Activated naive CD4-positive, alpha-beta T cell treated with anti-CD3 and anti-CD28 coated beads for 36 hours (primary cell): ENCODE measurements at regions of chr17 and their contacts with region 1.

Region 1: DNA sequence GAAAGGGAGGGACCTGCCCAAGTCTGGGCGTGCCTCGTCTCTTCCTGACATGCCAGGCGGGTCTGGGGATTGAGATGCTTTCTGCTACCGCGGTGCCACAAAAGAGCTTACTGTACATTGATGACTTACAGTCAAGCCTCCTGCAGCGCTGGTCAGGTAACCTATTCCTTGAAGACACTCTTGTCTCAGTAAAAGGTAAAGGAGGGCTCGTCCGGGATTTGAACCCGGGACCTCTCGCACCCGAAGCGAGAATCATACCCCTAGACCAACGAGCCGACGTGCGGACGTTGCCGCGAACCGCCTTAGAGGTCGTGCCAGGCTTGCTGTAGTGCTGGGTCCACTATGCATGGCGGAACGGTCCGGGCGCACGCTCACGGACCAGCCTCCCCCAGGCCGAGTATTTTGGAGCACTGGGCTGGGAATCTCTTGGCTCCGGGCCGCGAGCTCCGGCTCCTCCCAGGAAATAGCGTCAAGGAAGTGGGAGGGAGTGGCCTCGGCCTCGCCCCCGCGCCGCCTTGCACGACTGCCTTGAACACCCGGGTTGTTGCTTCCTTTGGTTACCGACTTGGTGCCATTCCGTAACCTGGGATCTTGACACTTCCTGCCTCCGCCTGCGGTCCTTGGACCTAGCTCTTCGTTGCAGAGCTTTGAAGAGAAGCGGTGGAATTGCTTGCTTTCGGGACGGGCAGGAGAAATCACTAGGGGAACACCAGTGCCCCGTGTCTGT is 12.4 kb upstream of the AURKB start:
- DNase-seq: peak; percentile 94
- H3K4me3 Mint-ChIP-seq: peak overlapping the region; percentile 96
- H3K27ac Mint-ChIP-seq: peak overlapping the region; percentile 96
- H3K4me1 Mint-ChIP-seq: peaks cover 37% of the 10 kb centered on the region
- H3K27me3 Mint-ChIP-seq: peaks cover 15% of the 10 kb centered on the region

Region 2: DNA sequence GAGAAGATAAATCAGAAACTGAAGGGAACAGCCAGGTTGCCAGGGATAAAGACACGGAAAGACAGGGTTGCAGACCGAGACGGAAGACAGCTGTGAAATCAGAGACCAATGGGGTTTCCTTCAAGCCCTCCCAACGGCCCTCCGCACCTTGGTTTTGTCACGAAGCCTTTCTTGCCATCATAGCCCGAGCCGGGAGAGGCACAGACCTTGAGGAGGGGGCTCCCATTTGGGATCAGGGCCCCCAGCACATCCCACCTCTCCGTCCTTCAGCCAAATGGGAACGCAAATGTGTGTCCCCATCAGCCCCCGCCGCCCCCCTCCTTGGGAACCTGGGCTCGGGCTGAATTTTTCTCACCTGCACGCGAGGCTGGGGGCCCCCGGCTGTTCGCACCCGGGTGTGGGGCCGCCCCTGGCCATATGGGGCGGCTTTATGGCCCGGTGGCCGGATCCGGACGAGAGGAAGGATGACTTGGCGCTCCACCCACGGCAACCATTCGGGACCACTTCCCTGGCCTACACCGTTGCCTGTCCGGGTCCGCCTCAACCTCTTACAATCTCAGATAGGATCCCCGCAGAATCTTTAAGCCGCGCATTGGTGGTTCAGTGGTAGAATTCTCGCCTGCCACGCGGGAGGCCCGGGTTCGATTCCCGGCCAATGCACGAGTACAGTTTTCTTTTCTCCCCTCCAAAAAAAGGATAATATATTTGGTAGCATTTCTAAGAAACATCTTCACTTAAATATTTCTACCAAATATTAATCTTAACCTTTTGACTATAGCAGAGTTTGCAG is 97.4 kb before region 1 on chr17:
- CTCF ChIA-PET with region 1: interaction called, 18 read pairs
- intact Hi-C with region 1: loop called (anchors 1 kb)
- DNase-seq: peak; percentile 96
- H3K4me3 Mint-ChIP-seq: peak overlapping the region; percentile 84
- H3K27ac Mint-ChIP-seq: peak overlapping the region; percentile 90
- H3K4me1 Mint-ChIP-seq: peaks cover 43% of the 10 kb centered on the region
- H3K27me3 Mint-ChIP-seq: peaks cover 29% of the 10 kb centered on the region

Region 3: DNA sequence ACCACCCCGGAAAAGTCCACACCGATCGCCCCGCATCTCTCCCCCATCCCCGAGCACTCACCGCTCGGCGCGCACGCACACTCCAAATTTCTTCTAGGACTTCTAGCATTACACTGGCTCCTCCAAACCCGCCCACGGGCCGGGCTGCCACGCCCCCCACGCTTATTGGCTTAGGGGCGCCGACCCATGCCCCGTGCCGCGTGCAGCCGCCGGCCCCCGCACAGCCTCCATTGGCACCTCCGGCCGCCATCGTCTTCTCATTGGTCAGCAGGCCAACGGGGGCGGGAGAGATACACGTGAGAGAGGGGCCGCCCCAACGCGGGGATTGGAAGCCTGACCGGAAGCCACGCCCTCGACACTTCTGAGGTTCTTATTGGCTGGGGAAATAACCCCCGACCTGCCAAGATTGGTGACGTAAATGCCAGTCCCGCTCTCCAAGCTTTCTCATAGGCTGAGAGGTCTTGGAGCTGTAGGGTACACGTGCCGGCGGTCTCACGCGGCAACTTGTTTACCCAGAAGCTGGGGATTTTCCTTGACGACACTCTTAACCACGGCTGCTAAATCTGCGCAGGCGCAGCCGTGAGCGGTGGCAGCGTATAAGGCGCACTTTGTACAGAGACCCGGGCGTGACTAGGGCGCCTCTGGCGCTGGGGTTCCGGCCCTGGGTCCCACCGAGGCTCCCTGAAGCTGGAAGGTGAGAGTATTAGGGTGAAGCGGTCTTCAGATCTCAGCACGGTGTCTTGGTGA is 66.4 kb before region 1 on chr17:
- CTCF ChIA-PET with region 1: no interaction called
- intact Hi-C with region 1: loop called (anchors 1 kb)
- DNase-seq: peak; percentile 100
- H3K4me3 Mint-ChIP-seq: no peak overlapping the region
- H3K27ac Mint-ChIP-seq: no peak overlapping the region
- H3K4me1 Mint-ChIP-seq: peaks cover 62% of the 10 kb centered on the region
- H3K27me3 Mint-ChIP-seq: no peaks in the 10 kb centered on the region

Region 4: DNA sequence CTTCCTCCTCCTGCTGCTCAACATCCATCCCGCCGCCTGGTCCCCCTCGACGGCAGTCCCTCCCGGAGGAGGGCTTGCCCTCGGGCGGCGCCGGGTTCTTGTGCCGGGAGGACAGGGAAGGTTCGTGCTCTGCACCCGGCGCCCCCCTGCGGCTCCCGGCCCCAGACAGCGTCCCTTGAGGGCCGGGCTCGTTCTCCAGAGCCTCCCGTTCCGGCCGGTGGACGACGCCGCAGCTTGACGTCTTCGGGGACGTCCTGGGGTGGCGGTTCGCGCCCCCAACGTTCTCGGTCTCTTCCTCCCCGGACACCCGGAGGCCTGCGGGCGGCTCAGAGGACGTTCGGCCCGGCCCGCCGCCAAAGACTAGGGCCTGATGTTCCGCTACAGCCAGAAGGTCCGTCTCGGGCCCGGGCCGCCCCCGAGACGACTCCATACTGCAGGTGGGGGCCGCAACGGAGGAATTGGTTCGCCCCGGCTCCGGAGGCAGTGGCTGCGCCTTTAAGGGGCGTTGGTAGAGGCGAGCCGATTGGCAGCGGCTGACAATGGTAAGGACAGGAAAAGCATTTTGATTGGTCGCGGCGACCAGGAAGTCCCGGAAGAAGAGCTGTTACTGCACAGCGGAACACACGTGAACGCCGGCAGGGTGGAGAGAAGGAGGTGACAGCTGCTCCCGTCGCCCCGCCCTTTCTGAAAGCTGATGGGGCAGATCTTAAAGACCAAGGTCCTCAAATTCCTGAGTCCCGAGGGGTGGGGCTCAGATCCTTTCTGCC is 32.9 kb before region 1 on chr17 and contains the start of gene BORCS6:
- CTCF ChIA-PET with region 1: interaction called, 6 read pairs
- intact Hi-C with region 1: loop called (anchors 1 kb)
- DNase-seq: peak; percentile 98
- H3K4me3 Mint-ChIP-seq: no peak within 1 kb of the TSS
- H3K27ac Mint-ChIP-seq: peak within 1 kb of the TSS; percentile 82
- H3K4me1 Mint-ChIP-seq: peaks cover 7% of the 10 kb centered on the region
- H3K27me3 Mint-ChIP-seq: no peaks in the 10 kb centered on the region
- total RNA-seq, gene BORCS6: 4.0 to 4.3 TPM

Region 5: DNA sequence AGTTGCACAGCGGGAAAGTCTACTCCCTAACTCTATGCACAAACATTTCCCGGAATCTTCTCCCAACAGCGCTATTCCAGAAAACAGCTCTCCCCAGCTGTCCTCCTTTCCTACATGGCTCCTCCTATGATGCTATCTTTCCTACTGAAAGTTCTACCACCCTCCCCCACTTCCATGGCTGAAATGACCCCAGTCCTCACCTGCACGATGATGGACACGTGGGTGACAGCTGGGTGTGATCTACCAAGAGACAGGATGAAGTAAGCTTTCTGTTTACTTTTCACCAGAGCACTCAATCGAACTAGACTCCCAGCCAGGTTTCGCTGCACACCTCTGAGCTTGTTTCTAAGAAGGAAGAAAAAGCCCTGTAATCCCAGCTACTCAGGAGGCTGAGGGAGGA is 14.4 kb after region 1 on chr17:
- CTCF ChIA-PET with region 1: no interaction called
- intact Hi-C with region 1: no loop called
- DNase-seq: no peak
- H3K4me3 Mint-ChIP-seq: no peak overlapping the region
- H3K27ac Mint-ChIP-seq: no peak overlapping the region
- H3K4me1 Mint-ChIP-seq: peaks cover 16% of the 10 kb centered on the region
- H3K27me3 Mint-ChIP-seq: no peaks in the 10 kb centered on the region

Region 6: DNA sequence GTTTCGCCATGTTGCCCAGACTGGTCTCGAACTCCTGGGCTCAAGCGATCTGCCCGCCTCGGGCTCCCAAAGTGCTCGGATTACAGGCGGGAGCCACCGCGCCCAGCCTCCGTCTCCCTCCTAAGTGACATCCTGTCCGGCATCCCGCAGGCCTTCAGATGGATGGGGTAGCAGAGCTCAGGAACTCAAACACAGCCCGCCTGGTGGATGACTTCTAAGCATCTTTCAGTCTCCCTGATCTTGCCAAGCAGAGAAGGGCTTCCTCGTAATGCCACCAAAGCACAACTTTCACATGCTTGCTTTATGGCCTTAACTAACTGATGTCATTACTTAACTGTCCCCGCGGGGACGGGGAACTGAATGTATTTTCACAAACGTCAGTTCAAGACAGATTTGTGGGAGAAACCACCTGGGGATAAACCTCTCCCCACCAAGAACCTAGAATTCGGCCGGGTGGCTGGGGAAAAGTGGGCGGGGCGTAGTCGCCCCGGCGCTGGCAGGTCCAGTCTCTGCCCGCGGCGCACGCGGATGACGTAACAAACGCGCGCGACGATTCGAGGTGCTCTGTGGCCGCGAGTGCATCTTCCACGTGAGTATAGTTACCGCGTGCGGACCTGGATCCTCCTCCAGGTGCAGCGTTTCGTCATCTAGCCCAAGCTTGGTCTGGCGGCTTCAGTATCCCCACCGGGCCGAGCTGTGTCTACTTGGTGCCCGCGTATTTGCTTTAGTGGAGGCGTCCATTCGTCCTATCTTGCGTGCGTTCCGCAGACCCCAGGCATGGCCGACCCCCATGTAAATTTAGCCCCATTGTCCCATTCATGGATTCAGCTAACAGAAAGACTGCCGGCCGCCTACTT is 26.2 kb after region 1 on chr17 and contains the start of gene PFAS:
- CTCF ChIA-PET with region 1: interaction called, 55 read pairs
- intact Hi-C with region 1: loop called (anchors 1 kb)
- DNase-seq: peak; percentile 97
- H3K4me3 Mint-ChIP-seq: peak within 1 kb of the TSS; percentile 99
- H3K27ac Mint-ChIP-seq: peak within 1 kb of the TSS; percentile 100
- H3K4me1 Mint-ChIP-seq: peaks cover 37% of the 10 kb centered on the region
- H3K27me3 Mint-ChIP-seq: no peaks in the 10 kb centered on the region
- total RNA-seq, gene PFAS: 106 to 110 TPM

Region 7: DNA sequence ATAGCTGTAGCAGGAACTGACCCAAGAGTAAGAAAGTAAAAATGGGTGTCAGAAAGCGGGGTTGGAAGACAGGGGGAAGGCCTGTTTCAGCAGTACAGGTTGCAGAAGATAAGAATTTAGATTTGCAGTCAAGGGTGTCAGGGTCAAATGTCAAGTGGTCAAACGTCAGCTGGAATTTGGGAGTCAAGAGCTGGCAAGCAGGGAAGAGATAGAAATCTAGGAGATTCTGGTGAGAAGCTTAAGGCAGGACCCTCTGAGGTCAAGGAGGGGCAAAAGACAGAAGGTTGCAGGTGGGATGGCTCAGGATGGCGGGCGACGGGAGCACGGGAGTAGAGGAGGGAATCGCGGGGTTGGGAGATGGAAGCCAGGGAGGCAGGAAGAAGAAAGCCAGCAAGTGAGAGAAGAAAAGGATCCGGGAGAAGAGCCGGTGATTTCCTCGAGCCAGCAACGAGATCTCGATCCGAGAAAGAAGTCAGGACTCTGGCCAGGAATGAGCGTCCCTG is 72.1 kb after region 1 on chr17:
- CTCF ChIA-PET with region 1: interaction called, 3 read pairs
- intact Hi-C with region 1: loop called (anchors 1 kb)
- DNase-seq: no peak
- H3K4me3 Mint-ChIP-seq: peak overlapping the region; percentile 85
- H3K27ac Mint-ChIP-seq: peak overlapping the region; percentile 77
- H3K4me1 Mint-ChIP-seq: peaks cover 19% of the 10 kb centered on the region
- H3K27me3 Mint-ChIP-seq: no peaks in the 10 kb centered on the region

Region 8: DNA sequence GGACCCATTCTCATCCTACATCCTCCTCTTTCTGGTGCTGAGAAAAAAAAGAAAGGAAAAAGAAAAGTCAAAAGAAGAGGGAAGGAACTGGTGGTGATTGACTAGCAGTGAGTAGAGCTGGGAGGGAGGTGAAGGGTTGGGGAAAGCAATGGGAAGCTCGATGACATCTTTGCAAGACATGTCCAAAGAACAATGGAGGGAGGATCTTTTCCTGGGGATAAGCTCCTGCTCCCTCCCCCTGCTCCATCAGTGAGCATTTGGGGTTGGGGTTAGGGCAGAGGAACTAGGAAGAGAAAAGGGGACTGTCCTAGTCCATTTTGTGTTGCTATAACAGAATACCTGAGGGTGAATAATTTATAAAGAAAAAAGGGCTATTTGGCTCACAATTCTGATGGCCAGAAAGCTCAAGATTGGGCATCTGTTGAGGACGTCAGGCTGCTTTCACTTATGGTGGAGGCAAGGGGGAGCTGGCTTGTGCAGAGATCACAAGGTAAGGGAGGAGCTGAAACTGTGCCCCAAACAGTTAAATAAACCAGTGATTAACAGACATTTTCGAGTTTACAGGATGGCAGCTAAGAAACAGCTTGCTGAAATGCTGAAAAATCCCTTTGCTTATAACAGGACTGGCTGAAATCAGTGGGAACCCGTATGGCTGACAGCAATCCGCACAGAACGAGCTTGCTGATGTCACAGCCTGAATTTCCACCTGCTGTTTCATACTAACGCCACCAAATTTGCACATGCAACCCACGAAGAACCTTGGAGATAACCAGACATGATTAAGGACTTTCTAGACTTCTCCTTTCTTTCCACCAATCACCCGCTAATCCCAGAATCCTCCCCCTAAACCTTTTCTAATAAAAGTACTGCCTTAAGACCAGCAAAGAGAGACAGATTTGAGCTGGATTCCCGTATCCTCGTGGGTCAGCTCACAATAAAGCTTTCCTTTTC is 115.3 kb after region 1 on chr17:
- CTCF ChIA-PET with region 1: no interaction called
- intact Hi-C with region 1: no loop called
- DNase-seq: peak; percentile 27
- H3K4me3 Mint-ChIP-seq: no peak overlapping the region
- H3K27ac Mint-ChIP-seq: peak overlapping the region; percentile 43
- H3K4me1 Mint-ChIP-seq: peaks cover 12% of the 10 kb centered on the region
- H3K27me3 Mint-ChIP-seq: no peaks in the 10 kb centered on the region